K562 (cell line): ENCODE measurements at regions of chr1 and their contacts with region 1.

Region 1: DNA sequence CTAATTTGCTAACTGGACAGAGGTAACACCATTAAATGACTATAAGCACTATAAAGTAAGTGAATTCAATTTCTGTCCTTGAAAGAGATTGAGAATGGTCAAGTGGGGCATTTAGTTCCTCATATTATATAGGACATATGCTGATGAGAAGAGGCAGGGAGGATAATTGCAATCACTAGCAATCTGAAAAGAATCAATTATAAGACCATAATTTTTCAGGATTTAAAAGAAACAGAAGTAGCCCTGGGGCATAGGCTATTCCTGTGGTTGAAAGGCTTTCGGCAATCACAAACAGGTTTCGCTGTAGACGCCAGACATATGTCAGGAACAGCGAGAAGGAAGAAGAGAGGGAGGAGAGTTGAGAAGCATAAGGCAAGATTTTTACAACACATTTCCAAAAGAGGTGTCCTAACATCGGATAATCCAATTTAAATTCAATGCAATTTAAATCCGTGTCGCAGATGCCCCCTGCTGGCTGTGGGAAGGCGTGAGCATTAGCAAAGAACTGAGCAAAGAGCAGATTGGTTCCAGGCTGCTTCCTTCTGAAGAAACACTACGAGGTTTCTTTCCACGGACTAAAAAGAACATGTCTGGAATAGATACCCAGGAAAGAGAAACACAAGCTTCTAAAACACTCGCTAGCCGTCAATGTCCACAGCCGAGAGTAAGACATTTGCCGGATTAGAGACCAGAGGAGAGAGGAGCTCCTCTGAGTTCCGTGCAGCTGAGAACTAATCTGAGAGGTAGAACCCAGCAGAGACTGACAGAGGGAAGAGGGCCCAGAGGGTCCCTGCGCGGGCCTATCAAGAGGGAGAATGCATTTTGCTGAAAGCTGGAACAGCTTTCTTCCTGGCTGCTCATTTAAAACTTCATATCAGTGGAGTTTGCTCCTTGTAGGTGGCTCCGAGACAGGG is 27.9 kb downstream of the RGS5 start:
- DNase-seq: peak; percentile 16 to 61 (median 36)
- ATAC-seq: peak; percentile 90
- H3K4me3 ChIP-seq: no peak overlapping the region
- H3K27ac ChIP-seq: no peak overlapping the region
- H3K4me1 ChIP-seq: no peaks in the 10 kb centered on the region
- H3K27me3 ChIP-seq: 0 out of 5 replicates have a peak, but pooled peaks cover 0 to 2% of the 10 kb centered on the region in 2 experiments
- CTCF ChIP-seq: peak; percentile 75 to 85 (median 84)
- EP300 ChIP-seq: no peak
- POLR2A ChIP-seq: no peak
- RAD21 ChIP-seq: peak; percentile 67 to 81

Region 2: DNA sequence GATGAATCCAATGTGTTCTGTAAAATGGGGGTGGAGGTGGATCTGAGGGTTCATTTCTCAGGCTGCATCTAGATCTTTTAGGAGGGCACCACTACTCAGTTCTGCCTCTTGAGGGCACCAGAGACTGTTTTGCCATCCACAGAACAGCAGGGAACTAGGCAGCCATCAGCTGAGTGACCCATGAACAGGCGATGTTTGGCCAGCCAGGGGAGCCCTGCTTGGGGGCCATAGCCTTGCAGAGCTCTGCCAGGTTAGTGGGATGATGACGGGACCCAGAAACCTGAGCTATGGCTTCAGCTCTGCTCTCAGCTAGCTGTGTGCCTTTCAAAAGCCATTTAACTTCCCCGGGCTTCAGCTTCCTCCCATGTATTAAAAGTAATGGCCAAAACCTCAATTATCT is 1118.7 kb before region 1 on chr1:
- CTCF ChIA-PET with region 1: no interaction called
- POLR2A ChIA-PET with region 1: no interaction called
- in situ Hi-C with region 1: no loop called
- intact Hi-C with region 1: loop called (anchors 10 kb)
- DNase-seq: peak; percentile 62 to 70 (median 65)
- ATAC-seq: peak; percentile 99
- H3K4me3 ChIP-seq: no peak overlapping the region
- H3K27ac ChIP-seq: no peak overlapping the region
- H3K4me1 ChIP-seq: no peaks in the 10 kb centered on the region
- H3K27me3 ChIP-seq: peaks cover 0 to 7% of the 10 kb centered on the region in 2 experiments; a peak in 1 of 5 replicates
- CTCF ChIP-seq: peak; percentile 88 to 93 (median 88)
- EP300 ChIP-seq: no peak
- POLR2A ChIP-seq: no peak
- RAD21 ChIP-seq: peak; percentile 91 to 94

Region 3: GRCh38 chr1:162847839-162848453 is 326.8 kb before region 1 on chr1:
- CTCF ChIA-PET with region 1: interaction called, 18 read pairs
- POLR2A ChIA-PET with region 1: no interaction called
- in situ Hi-C with region 1: no loop called
- intact Hi-C with region 1: no loop called
- DNase-seq: peak; percentile 69 to 87 (median 78)
- ATAC-seq: peak; percentile 86
- H3K4me3 ChIP-seq: no peak overlapping the region
- H3K27ac ChIP-seq: no peak overlapping the region
- H3K4me1 ChIP-seq: no peaks in the 10 kb centered on the region; a peak in 1 of 5 replicates
- H3K27me3 ChIP-seq: peaks cover 0 to 4% of the 10 kb centered on the region in 2 experiments; a peak in 2 of 5 replicates
- CTCF ChIP-seq: peak; percentile 81 to 94 (median 89)
- EP300 ChIP-seq: no peak
- POLR2A ChIP-seq: no peak
- RAD21 ChIP-seq: peak; percentile 60 to 80

Region 4: GRCh38 chr1:162854245-162854882 is 320.4 kb before region 1 on chr1:
- CTCF ChIA-PET with region 1: interaction called, 18 read pairs
- POLR2A ChIA-PET with region 1: no interaction called
- in situ Hi-C with region 1: no loop called
- intact Hi-C with region 1: loop called (anchors 2 kb)
- DNase-seq: peak; percentile 62 to 75 (median 67)
- ATAC-seq: peak; percentile 93
- H3K4me3 ChIP-seq: no peak overlapping the region
- H3K27ac ChIP-seq: no peak overlapping the region
- H3K4me1 ChIP-seq: no peaks in the 10 kb centered on the region
- H3K27me3 ChIP-seq: 0 out of 5 replicates have a peak, but pooled peaks cover 3 to 4% of the 10 kb centered on the region in 2 experiments
- CTCF ChIP-seq: peak; percentile 72 to 91 (median 78)
- EP300 ChIP-seq: no peak
- POLR2A ChIP-seq: no peak
- RAD21 ChIP-seq: peak; percentile 73 to 86

Region 5: DNA sequence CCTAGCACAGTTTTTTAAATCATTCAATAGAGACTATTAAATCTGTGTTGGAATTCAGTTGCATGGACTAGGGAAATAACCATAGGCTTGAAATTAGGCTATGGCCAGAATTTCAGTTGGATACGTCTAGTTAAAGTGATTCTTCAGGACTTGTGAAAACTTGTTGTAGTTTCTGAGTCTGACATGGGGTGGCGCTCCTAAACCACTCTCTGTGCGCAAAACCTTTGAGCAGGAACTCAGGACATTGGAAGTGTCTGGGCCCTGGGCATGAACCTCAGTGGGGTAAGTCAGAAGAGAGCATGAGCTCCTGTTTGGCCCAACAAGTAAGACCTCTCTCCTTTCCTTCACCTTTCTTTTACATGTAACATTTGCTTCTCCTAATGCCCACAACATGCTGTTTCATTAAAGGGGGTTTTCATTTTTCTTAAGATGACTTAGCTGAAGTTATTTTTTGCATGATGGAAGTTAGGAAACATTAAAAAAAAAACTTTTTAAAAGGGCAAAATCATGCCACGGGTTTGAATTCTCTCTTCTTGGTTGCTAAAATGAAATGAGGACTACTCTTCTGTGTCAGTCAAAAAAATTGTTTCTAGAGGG is 296.7 kb before region 1 on chr1:
- CTCF ChIA-PET with region 1: interaction called, 9 read pairs
- POLR2A ChIA-PET with region 1: no interaction called
- in situ Hi-C with region 1: no loop called
- intact Hi-C with region 1: loop called (anchors 1 kb)
- DNase-seq: peak; percentile 36 to 67 (median 40)
- ATAC-seq: peak; percentile 87
- H3K4me3 ChIP-seq: no peak overlapping the region
- H3K27ac ChIP-seq: no peak overlapping the region
- H3K4me1 ChIP-seq: no peaks in the 10 kb centered on the region
- H3K27me3 ChIP-seq: peaks cover 0 to 8% of the 10 kb centered on the region in 2 experiments; a peak in 2 of 5 replicates
- CTCF ChIP-seq: peak; percentile 77 to 88 (median 84)
- EP300 ChIP-seq: no peak
- POLR2A ChIP-seq: no peak
- RAD21 ChIP-seq: peak; percentile 80 to 88

Region 6: DNA sequence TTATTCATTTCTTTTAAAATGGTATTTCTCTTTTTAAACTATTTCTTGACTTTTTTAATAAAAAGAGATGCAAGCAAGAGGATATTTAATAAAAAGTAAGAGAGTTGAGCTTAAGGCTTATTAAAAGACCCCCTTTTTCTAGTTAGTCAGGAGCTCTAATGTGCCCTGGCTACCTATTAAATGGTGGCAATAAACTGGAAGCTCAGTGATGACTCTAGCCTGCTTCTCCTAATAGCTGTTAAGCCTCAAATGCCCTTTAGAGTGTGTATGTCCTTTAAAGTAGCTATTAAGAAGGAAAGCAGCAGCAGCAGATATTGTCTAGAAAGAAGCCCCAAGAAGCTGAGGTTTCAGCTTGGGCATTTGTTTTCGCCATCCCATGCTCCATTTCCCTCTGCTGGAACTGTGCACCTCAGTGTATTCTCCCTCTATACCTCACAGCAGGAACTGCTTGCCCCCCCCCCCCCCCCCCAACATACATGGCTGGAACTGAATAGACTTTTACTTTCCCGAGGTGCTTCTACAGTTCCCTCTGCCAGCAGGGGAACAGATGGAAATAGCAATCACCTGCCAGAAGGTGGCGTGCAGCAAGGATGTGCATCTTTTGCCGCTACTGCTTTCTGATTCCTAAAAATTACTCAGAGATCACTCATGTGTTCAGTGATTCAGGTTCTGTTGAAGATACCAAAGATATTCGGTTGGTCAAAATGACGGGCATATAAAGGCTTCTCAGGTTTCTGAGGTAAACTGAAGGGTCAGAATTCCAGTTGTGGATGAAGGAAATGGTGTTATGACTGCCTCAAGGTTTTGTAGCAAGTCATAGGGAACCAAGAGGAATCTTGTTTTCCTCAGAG is 103.2 kb before region 1 on chr1:
- CTCF ChIA-PET with region 1: no interaction called
- POLR2A ChIA-PET with region 1: no interaction called
- in situ Hi-C with region 1: no loop called
- intact Hi-C with region 1: loop called (anchors 1 kb)
- DNase-seq: peak; percentile 54 to 61 (median 59)
- ATAC-seq: peak; percentile 88
- H3K4me3 ChIP-seq: no peak overlapping the region
- H3K27ac ChIP-seq: no peak overlapping the region
- H3K4me1 ChIP-seq: no peaks in the 10 kb centered on the region
- H3K27me3 ChIP-seq: no peaks in the 10 kb centered on the region
- CTCF ChIP-seq: peak; percentile 62 to 90 (median 73)
- EP300 ChIP-seq: no peak
- POLR2A ChIP-seq: no peak
- RAD21 ChIP-seq: peak; percentile 25 to 51; a peak in 3 of 4 replicates

Region 7: GRCh38 chr1:163155606-163156005 is 19.2 kb before region 1 on chr1:
- CTCF ChIA-PET with region 1: no interaction called
- POLR2A ChIA-PET with region 1: no interaction called
- in situ Hi-C with region 1: no loop called
- intact Hi-C with region 1: no loop called
- DNase-seq: no peak
- ATAC-seq: no peak
- H3K4me3 ChIP-seq: no peak overlapping the region
- H3K27ac ChIP-seq: no peak overlapping the region
- H3K4me1 ChIP-seq: no peaks in the 10 kb centered on the region
- H3K27me3 ChIP-seq: no peaks in the 10 kb centered on the region
- CTCF ChIP-seq: no peak
- EP300 ChIP-seq: no peak
- POLR2A ChIP-seq: no peak
- RAD21 ChIP-seq: no peak

Region 8: DNA sequence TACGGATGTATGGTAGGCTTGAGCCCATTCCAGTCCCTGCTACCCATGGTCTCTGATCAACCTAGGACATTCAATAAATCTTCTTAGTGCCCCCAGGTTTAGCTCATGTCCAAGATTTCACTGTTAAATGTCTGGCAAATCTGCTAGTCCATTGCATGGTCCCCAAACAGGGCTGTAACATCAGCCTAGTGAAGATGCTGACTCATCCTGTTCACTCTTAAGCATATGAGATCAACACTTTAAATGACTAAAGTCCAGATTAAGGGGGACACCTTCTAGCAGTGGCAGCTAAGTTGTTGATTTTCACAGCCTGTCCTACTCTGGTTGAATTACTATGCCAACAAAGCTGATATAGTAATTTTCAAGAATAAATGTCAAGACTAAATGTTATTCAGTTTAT is 100.4 kb after region 1 on chr1:
- CTCF ChIA-PET with region 1: no interaction called
- POLR2A ChIA-PET with region 1: no interaction called
- in situ Hi-C with region 1: no loop called
- intact Hi-C with region 1: no loop called
- DNase-seq: peak in 3 of 4 experiments; percentile 20 to 29 (median 26)
- ATAC-seq: peak; percentile 80
- H3K4me3 ChIP-seq: no peak overlapping the region
- H3K27ac ChIP-seq: no peak overlapping the region
- H3K4me1 ChIP-seq: no peaks in the 10 kb centered on the region; a peak in 2 of 5 replicates
- H3K27me3 ChIP-seq: no peaks in the 10 kb centered on the region
- CTCF ChIP-seq: no peak
- EP300 ChIP-seq: no peak
- POLR2A ChIP-seq: no peak
- RAD21 ChIP-seq: no peak

Region 9: DNA sequence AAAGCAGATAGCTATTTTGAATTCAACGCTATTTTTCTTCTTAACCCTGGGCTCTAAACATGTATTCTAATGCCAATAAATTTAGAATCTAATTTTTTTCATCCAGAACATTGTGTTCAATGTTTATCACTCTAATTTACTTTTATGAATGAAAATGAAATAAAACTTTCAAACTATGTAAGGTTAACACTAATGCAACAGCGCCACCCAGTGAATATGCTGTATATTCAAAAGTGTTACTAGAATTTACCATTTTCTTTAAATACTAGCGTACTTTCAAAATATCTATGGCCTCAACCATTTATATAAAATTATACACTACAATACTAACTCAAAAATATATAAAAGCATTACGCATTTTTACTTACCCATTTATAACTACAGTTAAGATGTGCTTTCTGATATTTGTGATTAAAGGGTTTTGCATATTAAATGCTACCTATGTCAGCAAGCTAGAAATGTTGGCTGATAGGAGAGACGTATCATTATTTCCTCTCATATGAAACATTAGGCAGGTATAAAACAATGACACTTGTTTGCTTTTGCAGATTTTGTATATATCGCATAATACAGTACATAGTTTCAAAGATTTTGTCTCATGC is 141.1 kb after region 1 on chr1:
- CTCF ChIA-PET with region 1: no interaction called
- POLR2A ChIA-PET with region 1: no interaction called
- in situ Hi-C with region 1: no loop called
- intact Hi-C with region 1: loop called (anchors 2 kb)
- DNase-seq: peak in 3 of 4 experiments; percentile 22 to 57 (median 39)
- ATAC-seq: peak; percentile 71
- H3K4me3 ChIP-seq: no peak overlapping the region
- H3K27ac ChIP-seq: no peak overlapping the region
- H3K4me1 ChIP-seq: no peaks in the 10 kb centered on the region; a peak in 1 of 5 replicates
- H3K27me3 ChIP-seq: no peaks in the 10 kb centered on the region
- CTCF ChIP-seq: peak in 2 of 3 experiments; percentile 54 to 89; a peak in 4 of 6 replicates
- EP300 ChIP-seq: no peak
- POLR2A ChIP-seq: no peak
- RAD21 ChIP-seq: peak; percentile 75 to 78